Caco-2 (cell line): ENCODE measurements at regions of chr12 and their contacts with region 1.

Region 1: DNA sequence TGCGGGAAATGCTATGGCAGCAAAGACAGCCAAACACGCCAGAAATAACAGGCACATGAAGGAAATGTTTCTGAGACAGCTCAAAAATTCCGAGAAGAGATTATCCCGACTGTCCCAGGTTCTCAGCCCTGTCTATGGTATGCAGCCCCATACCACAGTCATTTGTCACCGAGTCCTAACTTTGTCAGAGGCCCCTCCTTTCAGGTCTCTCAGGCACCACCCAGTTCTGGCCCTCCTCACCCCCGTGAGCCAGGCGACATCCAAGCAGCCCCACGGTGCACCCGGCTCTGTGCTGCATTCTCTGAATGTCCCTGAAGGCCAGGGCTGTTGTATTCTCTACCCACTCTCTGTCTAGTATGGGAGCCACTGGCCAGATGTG is 24.0 kb downstream of the SSH1 start:
- DNase-seq: peak; percentile 75 to 84
- H3K4me3 ChIP-seq: no peak overlapping the region
- H3K4me3 Mint-ChIP-seq: peak overlapping the region; percentile 69
- H3K27ac Mint-ChIP-seq: peak overlapping the region; percentile 77
- H3K4me1 ChIP-seq: peaks cover 23% of the 10 kb centered on the region
- H3K4me1 Mint-ChIP-seq: peaks cover 33% of the 10 kb centered on the region
- H3K27me3 ChIP-seq: no peaks in the 10 kb centered on the region
- H3K27me3 Mint-ChIP-seq: no peaks in the 10 kb centered on the region
- CTCF ChIP-seq: no peak

Region 2: DNA sequence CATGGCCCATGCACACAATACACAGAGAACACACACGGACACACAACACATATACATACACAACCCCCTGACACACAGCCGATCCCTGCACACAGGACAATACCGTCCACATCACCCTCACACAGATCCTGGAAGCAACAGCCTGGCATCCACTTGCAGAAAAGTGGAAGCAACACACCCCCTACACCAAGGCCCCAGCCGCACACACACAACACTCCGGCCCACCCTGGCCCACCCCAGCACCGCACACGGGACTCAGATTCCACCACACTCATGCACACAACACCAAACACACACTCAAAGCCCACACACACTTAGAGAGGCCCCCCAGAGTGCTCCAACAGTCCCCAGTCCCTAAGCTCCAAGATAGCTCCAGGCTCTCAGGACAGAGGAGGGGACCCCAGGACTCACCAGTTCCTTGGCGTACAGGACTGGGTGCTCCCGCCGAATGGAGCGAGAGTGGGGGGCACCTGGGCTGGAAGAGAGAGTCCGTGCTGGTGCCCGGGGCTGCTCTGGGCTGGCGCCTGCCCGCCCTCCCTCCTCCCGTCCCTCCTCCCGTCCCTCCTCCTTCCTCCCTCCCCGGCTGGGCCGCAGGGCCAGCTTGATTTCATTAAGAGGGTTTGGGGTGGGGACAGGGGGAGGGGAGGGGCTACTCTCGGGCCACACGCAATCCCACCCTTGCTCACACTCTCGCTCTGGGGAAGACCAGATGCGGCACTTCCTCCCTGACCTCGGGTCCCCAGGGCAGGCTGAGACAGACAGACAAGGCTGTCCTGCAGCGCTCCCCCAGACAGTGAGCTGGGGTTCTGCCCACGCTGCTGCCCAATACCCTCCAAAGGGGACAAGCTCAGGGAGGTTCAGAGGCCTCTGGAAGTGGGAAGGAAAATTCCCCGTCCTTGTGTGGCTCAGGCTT is 235.5 kb before region 1 on chr12 and contains the start of gene TMEM119:
- CTCF ChIA-PET with region 1: no interaction called
- POLR2A ChIA-PET with region 1: no interaction called
- intact Hi-C with region 1: no loop called
- DNase-seq: no peak
- H3K4me3 ChIP-seq: no peak within 1 kb of the TSS
- H3K4me3 Mint-ChIP-seq: no peak within 1 kb of the TSS
- H3K27ac Mint-ChIP-seq: no peak within 1 kb of the TSS
- H3K4me1 ChIP-seq: no peaks in the 10 kb centered on the region
- H3K4me1 Mint-ChIP-seq: no peaks in the 10 kb centered on the region
- H3K27me3 ChIP-seq: no peaks in the 10 kb centered on the region
- H3K27me3 Mint-ChIP-seq: no peaks in the 10 kb centered on the region
- CTCF ChIP-seq: no peak
- total RNA-seq, gene TMEM119: not detected in 2 replicates

Region 3: GRCh38 chr12:108640802-108641445 is 192.4 kb before region 1 on chr12:
- CTCF ChIA-PET with region 1: no interaction called
- POLR2A ChIA-PET with region 1: no interaction called
- intact Hi-C with region 1: no loop called
- DNase-seq: no peak
- H3K4me3 ChIP-seq: no peak overlapping the region
- H3K4me3 Mint-ChIP-seq: no peak overlapping the region
- H3K27ac Mint-ChIP-seq: no peak overlapping the region
- H3K4me1 ChIP-seq: no peaks in the 10 kb centered on the region
- H3K4me1 Mint-ChIP-seq: peaks cover 7% of the 10 kb centered on the region
- H3K27me3 ChIP-seq: no peaks in the 10 kb centered on the region
- H3K27me3 Mint-ChIP-seq: no peaks in the 10 kb centered on the region
- CTCF ChIP-seq: no peak

Region 4: GRCh38 chr12:108821407-108822397 is 11.6 kb before region 1 on chr12:
- CTCF ChIA-PET with region 1: no interaction called
- POLR2A ChIA-PET with region 1: no interaction called
- intact Hi-C with region 1: no loop called
- DNase-seq: no peak
- H3K4me3 ChIP-seq: no peak overlapping the region
- H3K4me3 Mint-ChIP-seq: no peak overlapping the region
- H3K27ac Mint-ChIP-seq: no peak overlapping the region
- H3K4me1 ChIP-seq: peaks cover 20% of the 10 kb centered on the region
- H3K4me1 Mint-ChIP-seq: peaks cover 17% of the 10 kb centered on the region
- H3K27me3 ChIP-seq: no peaks in the 10 kb centered on the region
- H3K27me3 Mint-ChIP-seq: no peaks in the 10 kb centered on the region
- CTCF ChIP-seq: no peak

Region 5: DNA sequence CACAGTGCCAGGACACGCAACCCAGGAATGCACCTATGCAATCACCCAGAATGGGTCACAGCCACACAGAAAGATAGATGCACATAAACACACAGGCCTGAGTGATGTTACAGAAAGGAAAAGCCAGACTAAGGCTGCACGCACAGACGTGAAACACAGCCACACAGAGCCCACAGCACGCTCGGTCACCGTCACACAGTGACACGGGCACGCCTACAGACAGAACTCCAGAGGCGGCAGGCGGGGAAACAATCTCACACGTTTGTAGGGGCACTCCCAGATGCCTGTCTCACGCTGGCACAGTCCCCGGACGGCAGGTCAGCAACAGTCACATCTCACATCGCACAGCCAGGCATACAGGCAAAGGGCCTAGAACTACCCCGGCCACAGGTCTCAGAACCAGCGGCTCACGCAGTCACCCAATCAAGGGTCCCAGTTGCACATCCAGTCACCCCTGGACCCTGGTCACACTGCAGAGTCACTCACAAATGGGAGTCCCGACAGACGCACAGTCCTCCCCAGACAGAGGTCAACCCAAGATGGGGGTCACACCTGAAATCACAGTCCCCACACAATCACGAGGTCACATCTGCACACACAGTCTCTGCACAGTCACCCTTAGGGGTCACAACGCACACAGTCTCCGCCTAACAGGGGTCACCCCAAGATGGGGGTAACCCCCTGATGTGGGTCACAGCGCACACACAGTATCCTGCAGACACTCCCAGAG is 23.2 kb after region 1 on chr12:
- CTCF ChIA-PET with region 1: interaction called, 4 read pairs
- POLR2A ChIA-PET with region 1: interaction called, 6 read pairs
- intact Hi-C with region 1: loop called (anchors 2 kb)
- DNase-seq: peak in 1 of 2 experiments; percentile 23
- H3K4me3 ChIP-seq: peak overlapping the region; percentile 90
- H3K4me3 Mint-ChIP-seq: peak overlapping the region; percentile 87
- H3K27ac Mint-ChIP-seq: peak overlapping the region; percentile 91
- H3K4me1 ChIP-seq: peaks cover 10% of the 10 kb centered on the region
- H3K4me1 Mint-ChIP-seq: peaks cover 29% of the 10 kb centered on the region
- H3K27me3 ChIP-seq: no peaks in the 10 kb centered on the region
- H3K27me3 Mint-ChIP-seq: no peaks in the 10 kb centered on the region
- CTCF ChIP-seq: no peak